ENCODE measurements at regions of chr5 and their contacts with region 1.

Region 1: DNA sequence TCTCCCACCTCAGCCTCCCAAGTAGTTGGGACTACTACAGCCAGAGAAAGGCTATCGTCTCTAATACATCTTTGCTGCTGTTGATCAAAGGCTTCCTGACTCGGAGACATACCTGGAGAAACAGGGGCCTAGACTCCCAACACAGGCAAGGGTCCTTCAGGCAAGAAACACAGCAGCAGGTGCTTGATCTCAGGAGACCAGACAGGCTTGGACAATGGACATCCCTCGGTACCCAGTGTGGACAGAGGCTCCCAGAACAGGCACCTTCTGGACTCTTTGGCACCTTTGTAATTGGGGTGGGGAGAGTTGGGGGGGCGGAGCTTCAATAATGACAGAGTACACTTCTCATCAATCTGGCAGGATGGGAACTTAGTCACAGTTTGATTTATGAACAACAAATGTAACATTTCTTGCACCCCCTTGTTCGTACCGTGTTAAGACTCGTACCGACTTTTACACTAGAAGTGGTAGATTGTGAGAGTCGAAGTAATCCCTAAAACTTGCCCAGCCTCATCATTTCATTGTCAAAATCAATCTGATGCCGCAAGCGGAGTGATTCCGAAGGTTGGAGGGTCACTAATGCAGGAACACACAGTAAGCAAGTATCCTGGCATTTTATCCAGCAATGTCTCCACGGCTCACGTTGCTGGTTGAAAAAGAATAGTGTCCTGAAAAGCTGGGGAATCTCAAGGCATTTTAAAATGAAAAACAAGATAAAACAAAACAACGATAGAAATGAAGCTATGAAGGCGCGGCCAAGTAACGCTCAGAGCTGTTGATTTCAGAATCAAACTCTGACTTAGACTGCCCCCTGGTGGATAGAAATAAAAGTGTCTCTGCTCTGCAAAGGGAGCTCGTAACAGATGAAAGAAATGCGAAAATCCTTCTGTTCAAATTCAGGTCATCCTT is 46.4 kb upstream of the STK32A start:
- DNase-seq: peak; percentile 65
- ATAC-seq: no peak
- H3K4me3 Mint-ChIP-seq: no peak overlapping the region
- H3K27ac Mint-ChIP-seq: peak overlapping the region; percentile 34
- H3K4me1 Mint-ChIP-seq: peaks cover 4% of the 10 kb centered on the region
- H3K27me3 Mint-ChIP-seq: peaks cover 6% of the 10 kb centered on the region

Region 2: GRCh38 chr5:146533260-146533857 is 655.1 kb before region 1 on chr5:
- CTCF ChIA-PET with region 1: interaction called, 45 read pairs
- POLR2A ChIA-PET with region 1: no interaction called
- DNase-seq: peak; percentile 86
- ATAC-seq: peak; percentile 94
- H3K4me3 Mint-ChIP-seq: no peak overlapping the region
- H3K27ac Mint-ChIP-seq: no peak overlapping the region
- H3K4me1 Mint-ChIP-seq: peaks cover 16% of the 10 kb centered on the region
- H3K27me3 Mint-ChIP-seq: peaks cover 4% of the 10 kb centered on the region

Region 3: DNA sequence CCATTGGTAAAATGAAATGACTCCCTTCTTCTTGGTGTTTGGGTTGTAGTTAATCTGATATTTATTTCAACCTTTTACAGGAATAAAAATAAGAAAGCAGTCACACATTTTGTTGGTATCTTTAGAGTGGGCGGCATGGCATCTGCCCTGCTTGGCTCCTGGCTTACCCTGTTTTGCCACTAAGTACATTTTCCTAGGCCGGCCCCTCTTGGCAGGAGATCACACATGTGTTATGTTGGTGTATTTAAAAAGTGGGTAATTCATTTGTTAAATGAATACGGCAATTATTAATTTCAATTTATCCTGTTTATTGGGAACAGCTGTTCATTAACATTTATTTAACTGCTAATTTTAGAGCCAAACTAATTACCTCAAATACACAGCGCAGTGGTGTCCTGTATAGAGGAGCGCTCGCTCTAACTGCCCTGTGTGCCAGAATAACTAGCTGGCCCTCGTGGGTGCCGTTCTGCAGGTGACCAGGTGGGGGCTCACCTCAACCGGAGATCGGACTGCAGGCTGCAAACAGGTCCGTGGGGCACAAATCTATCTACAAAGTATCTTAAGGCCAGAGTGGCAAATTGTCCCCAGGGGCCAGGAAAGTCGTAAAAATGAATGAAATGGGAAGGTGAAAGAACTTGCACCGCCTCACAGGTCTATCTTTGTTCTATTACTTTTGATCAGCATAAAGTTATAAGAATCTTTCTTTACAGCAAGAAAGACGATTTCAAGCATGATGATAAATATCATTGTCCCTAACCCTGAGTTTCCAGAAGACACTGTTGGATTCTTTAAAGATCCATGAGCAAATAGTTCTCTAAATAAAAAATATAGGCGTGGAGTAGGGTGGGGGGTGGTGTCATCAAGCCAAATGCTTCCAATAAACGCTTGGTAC is 646.2 kb before region 1 on chr5:
- CTCF ChIA-PET with region 1: interaction called, 29 read pairs
- POLR2A ChIA-PET with region 1: no interaction called
- DNase-seq: peak; percentile 78
- ATAC-seq: peak; percentile 92
- H3K4me3 Mint-ChIP-seq: no peak overlapping the region
- H3K27ac Mint-ChIP-seq: no peak overlapping the region
- H3K4me1 Mint-ChIP-seq: no peaks in the 10 kb centered on the region
- H3K27me3 Mint-ChIP-seq: no peaks in the 10 kb centered on the region

Region 4: GRCh38 chr5:147098233-147098790 is 90.1 kb before region 1 on chr5:
- CTCF ChIA-PET with region 1: interaction called, 35 read pairs
- POLR2A ChIA-PET with region 1: no interaction called
- DNase-seq: peak; percentile 23
- ATAC-seq: no peak
- H3K4me3 Mint-ChIP-seq: no peak overlapping the region
- H3K27ac Mint-ChIP-seq: no peak overlapping the region
- H3K4me1 Mint-ChIP-seq: no peaks in the 10 kb centered on the region
- H3K27me3 Mint-ChIP-seq: no peaks in the 10 kb centered on the region

Region 5: DNA sequence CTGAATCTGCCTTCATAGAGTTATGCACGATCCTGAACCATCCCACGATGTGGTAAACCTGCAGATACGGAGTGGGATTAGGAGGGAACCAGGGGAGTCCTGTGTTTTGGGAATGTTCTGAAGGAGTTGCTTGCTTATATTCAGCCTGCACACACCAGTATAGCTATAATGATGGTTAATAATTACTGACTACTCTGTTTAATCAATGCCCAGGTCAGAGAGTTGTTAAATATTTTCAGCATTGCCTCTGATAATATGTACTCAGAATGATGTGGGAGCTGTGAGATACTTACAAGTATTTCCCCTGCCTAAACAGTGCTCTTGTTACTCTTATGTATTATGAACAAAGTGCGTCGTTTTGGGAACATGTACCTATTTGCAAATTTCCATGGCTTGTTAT is 11.5 kb after region 1 on chr5:
- CTCF ChIA-PET with region 1: interaction called, 14 read pairs
- POLR2A ChIA-PET with region 1: no interaction called
- DNase-seq: no peak
- ATAC-seq: no peak
- H3K4me3 Mint-ChIP-seq: no peak overlapping the region
- H3K27ac Mint-ChIP-seq: no peak overlapping the region
- H3K4me1 Mint-ChIP-seq: no peaks in the 10 kb centered on the region
- H3K27me3 Mint-ChIP-seq: no peaks in the 10 kb centered on the region

Region 6: GRCh38 chr5:147332658-147333057 is 144.2 kb after region 1 on chr5:
- CTCF ChIA-PET with region 1: no interaction called
- POLR2A ChIA-PET with region 1: no interaction called
- DNase-seq: no peak
- ATAC-seq: no peak
- H3K4me3 Mint-ChIP-seq: no peak overlapping the region
- H3K27ac Mint-ChIP-seq: no peak overlapping the region
- H3K4me1 Mint-ChIP-seq: no peaks in the 10 kb centered on the region
- H3K27me3 Mint-ChIP-seq: no peaks in the 10 kb centered on the region